WTC11 (cell line): ENCODE measurements at regions of chr10 and their contacts with region 1.

Region 1: GRCh38 chr10:111076191-111076681 is 593 bp upstream of the ADRA2A start:
- DNase-seq: peak; percentile 92
- ATAC-seq: peak; percentile 82
- H3K4me3 Mint-ChIP-seq: peak overlapping the region; percentile 72
- H3K27ac Mint-ChIP-seq: no peak overlapping the region
- H3K4me1 Mint-ChIP-seq: peaks cover 10% of the 10 kb centered on the region
- H3K27me3 Mint-ChIP-seq: peaks cover 55% of the 10 kb centered on the region
- CTCF ChIP-seq: peak; percentile 66; the same call in 1 of the 2 replicates

Region 2: GRCh38 chr10:111131240-111131799 is 55.1 kb after region 1 on chr10:
- CTCF ChIA-PET with region 1: interaction called, 16 read pairs
- POLR2A ChIA-PET with region 1: no interaction called
- DNase-seq: no peak
- ATAC-seq: no peak
- H3K4me3 Mint-ChIP-seq: no peak overlapping the region
- H3K27ac Mint-ChIP-seq: no peak overlapping the region
- H3K4me1 Mint-ChIP-seq: peaks cover 45% of the 10 kb centered on the region
- H3K27me3 Mint-ChIP-seq: peaks cover 3% of the 10 kb centered on the region
- CTCF ChIP-seq: no peak

Region 3: DNA sequence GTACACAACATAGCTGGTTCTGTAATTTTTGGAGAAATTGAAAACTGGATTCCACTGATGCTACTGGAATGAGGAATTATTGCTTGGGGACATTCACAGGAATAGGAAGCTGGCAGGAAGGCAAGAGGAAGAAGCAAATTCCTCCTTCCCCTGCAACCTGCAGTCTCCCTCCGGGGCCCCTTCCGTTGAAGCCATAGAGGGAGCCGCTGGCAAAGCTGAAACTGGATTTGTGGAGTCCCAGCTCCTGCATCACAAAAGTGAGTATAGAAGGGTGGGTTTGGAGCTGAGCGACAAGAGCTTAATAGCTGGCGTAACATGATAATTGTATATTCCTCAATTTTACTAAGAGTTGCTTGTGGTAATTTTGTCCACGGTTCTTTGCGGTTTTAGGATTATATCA is 191.4 kb after region 1 on chr10:
- CTCF ChIA-PET with region 1: interaction called, 10 read pairs
- POLR2A ChIA-PET with region 1: no interaction called
- DNase-seq: peak; percentile 22
- ATAC-seq: peak; percentile 66
- H3K4me3 Mint-ChIP-seq: no peak overlapping the region
- H3K27ac Mint-ChIP-seq: no peak overlapping the region
- H3K4me1 Mint-ChIP-seq: peaks cover 5% of the 10 kb centered on the region
- H3K27me3 Mint-ChIP-seq: no peaks in the 10 kb centered on the region
- CTCF ChIP-seq: no peak

Region 4: GRCh38 chr10:111344804-111345203 is 268.6 kb after region 1 on chr10:
- CTCF ChIA-PET with region 1: interaction called, 10 read pairs
- POLR2A ChIA-PET with region 1: no interaction called
- DNase-seq: peak; percentile 10
- ATAC-seq: peak; percentile 89
- H3K4me3 Mint-ChIP-seq: no peak overlapping the region
- H3K27ac Mint-ChIP-seq: no peak overlapping the region
- H3K4me1 Mint-ChIP-seq: peaks cover 6% of the 10 kb centered on the region; the same call in 1 of the 2 replicates
- H3K27me3 Mint-ChIP-seq: peaks cover 4% of the 10 kb centered on the region; the same call in 1 of the 2 replicates
- CTCF ChIP-seq: 0 out of 2 replicates have a peak, but pooled peaks have one; percentile 28